Activated B cell treated with CpG ODN at 0.5 μM for 24 hours (primary cell): ENCODE measurements at regions of chr1 and their contacts with region 1.

Region 1: DNA sequence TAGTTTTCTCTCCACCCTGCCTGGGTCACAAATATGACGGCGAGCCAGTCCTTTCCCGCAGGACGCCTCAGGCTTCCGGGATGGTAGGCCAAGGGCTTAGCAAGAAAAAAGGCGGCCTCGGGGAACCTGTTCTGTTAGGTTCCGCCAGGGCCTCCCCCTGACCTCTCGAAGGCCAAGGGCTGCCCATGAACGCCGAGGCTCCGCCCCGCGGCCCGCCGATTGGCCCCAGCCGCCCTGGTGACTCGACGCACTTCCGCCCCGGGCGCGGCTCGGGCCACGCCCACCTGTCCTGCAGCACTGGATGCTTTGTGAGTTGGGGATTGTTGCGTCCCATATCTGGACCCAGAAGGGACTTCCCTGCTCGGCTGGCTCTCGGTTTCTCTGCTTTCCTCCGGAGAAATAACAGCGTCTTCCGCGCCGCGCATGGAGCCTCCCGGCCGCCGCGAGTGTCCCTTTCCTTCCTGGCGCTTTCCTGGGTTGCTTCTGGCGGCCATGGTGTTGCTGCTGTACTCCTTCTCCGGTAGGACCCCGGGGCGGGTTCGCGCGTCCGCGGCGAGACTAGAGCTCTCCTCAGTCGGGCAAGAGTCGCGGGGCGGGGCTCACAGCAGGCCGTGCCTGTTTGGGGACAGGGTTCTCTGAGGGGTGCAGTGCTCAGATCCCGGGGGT is at the start of gene CD46:
- DNase-seq: peak; percentile 89
- ATAC-seq: peak; percentile 97
- H3K4me3 Mint-ChIP-seq: peak within 1 kb of the TSS; percentile 100
- H3K27ac Mint-ChIP-seq: peak within 1 kb of the TSS; percentile 96
- H3K4me1 Mint-ChIP-seq: peaks cover 56% of the 10 kb centered on the region
- H3K27me3 Mint-ChIP-seq: no peaks in the 10 kb centered on the region
- CTCF ChIP-seq: no peak
- total RNA-seq, gene CD46: 109 and 110 TPM in 2 replicates

Region 2: GRCh38 chr1:207644852-207645634 is 106.9 kb before region 1 on chr1 and contains the start of gene CR1L:
- CTCF ChIA-PET with region 1: no interaction called
- POLR2A ChIA-PET with region 1: no interaction called
- intact Hi-C with region 1: loop called (anchors 5 kb)
- DNase-seq: peak; percentile 77
- ATAC-seq: peak; percentile 99
- H3K4me3 Mint-ChIP-seq: peak within 1 kb of the TSS; percentile 81
- H3K27ac Mint-ChIP-seq: no peak within 1 kb of the TSS
- H3K4me1 Mint-ChIP-seq: peaks cover 8% of the 10 kb centered on the region
- H3K27me3 Mint-ChIP-seq: no peaks in the 10 kb centered on the region
- CTCF ChIP-seq: no peak
- total RNA-seq, gene CR1L: 0.60 and 0.73 TPM in 2 replicates

Region 3: DNA sequence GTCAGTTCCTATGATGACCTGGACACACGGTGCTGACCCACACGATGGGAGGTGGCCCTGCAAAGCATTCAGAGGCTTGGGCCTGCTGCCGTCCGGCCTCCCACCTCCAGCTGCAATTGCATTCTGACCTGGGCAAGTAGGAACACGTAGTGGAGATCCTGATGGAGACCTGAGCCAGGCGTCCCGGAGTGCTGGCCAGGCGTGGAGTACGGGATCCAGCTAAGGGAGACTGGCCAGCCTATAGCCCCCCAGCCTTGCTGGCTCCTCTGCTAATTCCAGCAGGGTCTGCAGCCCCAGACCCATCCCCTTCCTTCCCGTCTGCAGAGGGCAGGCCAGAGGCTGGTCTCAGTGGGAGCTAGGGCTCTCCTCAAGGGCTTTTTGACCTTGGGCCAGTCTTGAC is 11.2 kb after region 1 on chr1:
- CTCF ChIA-PET with region 1: no interaction called
- POLR2A ChIA-PET with region 1: no interaction called
- intact Hi-C with region 1: no loop called
- DNase-seq: no peak
- ATAC-seq: no peak
- H3K4me3 Mint-ChIP-seq: no peak overlapping the region
- H3K27ac Mint-ChIP-seq: no peak overlapping the region
- H3K4me1 Mint-ChIP-seq: no peaks in the 10 kb centered on the region
- H3K27me3 Mint-ChIP-seq: no peaks in the 10 kb centered on the region
- CTCF ChIP-seq: no peak

Region 4: GRCh38 chr1:207797229-207797961 is 45.5 kb after region 1 on chr1:
- CTCF ChIA-PET with region 1: no interaction called
- POLR2A ChIA-PET with region 1: no interaction called
- intact Hi-C with region 1: loop called (anchors 2 kb)
- DNase-seq: peak; percentile 54
- ATAC-seq: peak; percentile 92
- H3K4me3 Mint-ChIP-seq: no peak overlapping the region
- H3K27ac Mint-ChIP-seq: peak overlapping the region; percentile 27
- H3K4me1 Mint-ChIP-seq: peaks cover 30% of the 10 kb centered on the region
- H3K27me3 Mint-ChIP-seq: no peaks in the 10 kb centered on the region
- CTCF ChIP-seq: peak; percentile 90

Region 5: DNA sequence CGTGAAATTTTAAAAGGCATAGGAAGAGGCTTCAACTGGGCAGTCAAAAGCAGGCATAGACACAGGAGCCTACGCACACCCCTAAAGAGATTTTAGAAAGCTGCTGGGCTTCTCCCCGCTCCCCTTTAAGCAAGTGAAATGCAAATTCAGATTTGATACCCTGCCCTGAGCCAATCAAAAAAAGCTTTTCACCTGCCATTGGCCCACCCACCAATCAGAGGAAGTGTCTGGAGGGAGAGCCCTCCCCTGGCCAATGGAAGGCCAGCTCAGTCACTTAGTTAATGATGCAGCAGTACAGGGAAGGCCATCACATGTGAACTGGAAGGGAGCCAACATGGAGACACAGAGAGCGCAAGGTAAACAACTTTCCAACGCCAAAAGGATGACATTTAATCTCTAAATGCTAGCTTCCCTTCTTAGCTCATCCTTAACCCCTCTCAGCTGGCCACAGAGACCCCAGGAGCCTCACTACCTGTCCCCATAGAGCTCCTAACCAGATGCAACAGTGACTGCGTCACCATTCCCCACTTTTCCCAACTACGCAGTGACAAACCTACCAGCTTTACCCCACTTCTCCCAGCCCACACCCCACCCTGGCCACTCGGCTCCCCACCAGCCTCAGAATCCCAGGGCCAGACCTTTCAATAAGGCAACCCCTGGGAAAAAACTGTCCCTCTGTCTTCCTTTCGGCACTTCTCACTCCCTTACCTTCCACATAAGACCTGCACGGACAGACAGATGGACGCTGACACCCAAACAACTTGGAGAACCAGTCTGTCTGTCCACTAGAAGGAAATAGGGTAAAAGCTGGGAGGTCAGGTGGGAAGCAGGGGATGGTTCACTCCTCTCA is 70.9 kb after region 1 on chr1:
- CTCF ChIA-PET with region 1: no interaction called
- POLR2A ChIA-PET with region 1: interaction called, 10 read pairs
- intact Hi-C with region 1: loop called (anchors 5 kb)
- DNase-seq: peak; percentile 67
- ATAC-seq: peak; percentile 66
- H3K4me3 Mint-ChIP-seq: peak overlapping the region; percentile 99
- H3K27ac Mint-ChIP-seq: peak overlapping the region; percentile 93
- H3K4me1 Mint-ChIP-seq: peaks cover 94% of the 10 kb centered on the region
- H3K27me3 Mint-ChIP-seq: peaks cover 2% of the 10 kb centered on the region
- CTCF ChIP-seq: no peak

Region 6: GRCh38 chr1:207868774-207869721 is 117.1 kb after region 1 on chr1:
- CTCF ChIA-PET with region 1: no interaction called
- POLR2A ChIA-PET with region 1: no interaction called
- intact Hi-C with region 1: loop called (anchors 5 kb)
- DNase-seq: peak; percentile 74
- ATAC-seq: peak; percentile 83
- H3K4me3 Mint-ChIP-seq: peak overlapping the region; percentile 91
- H3K27ac Mint-ChIP-seq: peak overlapping the region; percentile 86
- H3K4me1 Mint-ChIP-seq: peaks cover 86% of the 10 kb centered on the region
- H3K27me3 Mint-ChIP-seq: no peaks in the 10 kb centered on the region
- CTCF ChIP-seq: peak; percentile 34

Region 7: DNA sequence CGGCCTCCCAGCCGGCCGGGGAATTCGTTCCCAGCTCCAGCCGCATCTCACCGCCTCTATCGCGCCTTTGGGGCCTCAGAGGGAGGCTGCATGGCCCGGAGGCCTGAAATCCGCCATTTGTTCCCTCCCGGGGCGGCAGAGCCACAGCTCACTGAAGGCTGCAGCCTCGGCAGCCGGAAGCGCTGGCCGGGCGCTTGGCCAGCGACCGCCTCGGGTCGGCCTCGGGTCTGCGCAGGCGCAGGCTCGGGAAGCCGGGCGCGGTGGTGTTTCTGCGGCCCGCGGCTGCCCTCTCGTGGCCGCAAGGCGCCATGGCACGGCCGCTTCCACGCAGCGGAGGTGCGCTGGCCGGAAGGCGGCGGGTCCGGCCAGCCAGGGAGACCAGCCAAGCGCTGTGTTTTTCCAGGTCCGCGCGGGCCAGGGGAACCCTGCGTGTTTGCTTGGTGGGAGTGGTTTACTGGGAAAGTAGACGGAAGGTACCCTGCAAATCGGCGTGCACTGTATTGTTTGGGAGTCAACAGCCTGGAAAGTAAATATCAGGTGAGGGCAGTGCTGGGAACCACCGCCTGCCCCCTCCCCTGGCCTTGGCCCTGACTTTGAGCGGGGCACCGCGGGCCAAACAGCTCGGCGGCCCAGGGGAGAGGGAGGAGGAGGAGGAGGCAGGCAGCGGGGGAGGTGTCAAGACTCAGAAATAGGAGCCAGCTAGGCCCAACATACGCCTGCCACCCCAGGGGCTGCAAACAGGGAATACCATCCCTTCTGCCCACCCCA is 211.7 kb after region 1 on chr1:
- CTCF ChIA-PET with region 1: no interaction called
- POLR2A ChIA-PET with region 1: no interaction called
- intact Hi-C with region 1: loop called (anchors 5 kb)
- DNase-seq: peak; percentile 89
- ATAC-seq: peak; percentile 95
- H3K4me3 Mint-ChIP-seq: peak overlapping the region; percentile 87
- H3K27ac Mint-ChIP-seq: no peak overlapping the region
- H3K4me1 Mint-ChIP-seq: peaks cover 17% of the 10 kb centered on the region
- H3K27me3 Mint-ChIP-seq: peaks cover 28% of the 10 kb centered on the region
- CTCF ChIP-seq: peak; percentile 54